Right ventricle myocardium superior (tissue), 1 donor: ENCODE measurements at regions of chr13 and their contacts with region 1.

Region 1: DNA sequence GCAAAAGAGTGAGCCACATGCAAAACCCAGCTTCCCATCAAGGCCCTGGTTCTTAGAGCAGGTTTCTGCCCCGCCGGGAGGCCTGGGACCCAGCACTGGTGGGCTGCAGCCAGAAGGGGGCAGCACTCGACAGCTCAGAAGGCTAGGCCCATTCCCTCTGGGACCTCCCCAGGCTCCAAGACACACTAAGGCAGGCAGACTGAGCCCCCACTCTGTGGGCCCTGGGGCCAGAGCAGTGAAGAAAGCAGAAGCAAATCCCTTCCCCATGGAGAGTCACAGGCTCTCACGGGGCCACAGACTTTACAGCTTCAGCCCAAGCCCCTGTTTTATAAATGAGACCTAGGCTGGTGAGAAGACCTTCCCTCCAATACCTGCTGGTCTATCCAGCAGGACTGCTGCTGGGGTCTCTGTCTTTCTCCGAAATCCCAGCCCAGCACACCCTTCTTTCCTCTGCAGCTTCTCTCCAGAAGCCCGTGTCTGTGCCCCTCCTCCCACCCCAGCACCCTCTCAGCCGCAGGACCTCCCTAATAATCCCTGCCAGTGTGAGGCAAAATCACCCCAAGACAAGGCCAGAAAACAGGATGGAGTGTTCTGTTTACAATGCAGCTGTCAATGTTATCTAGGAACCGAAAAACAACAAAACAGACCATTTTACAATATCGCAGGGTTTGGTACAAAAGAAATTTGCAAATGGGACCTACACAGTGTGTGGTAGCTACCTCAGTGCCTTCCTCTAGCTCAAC is 109.3 kb downstream of the ABCC4 start:
- DNase-seq: peak; percentile 86
- ATAC-seq: peak; percentile 91

Region 2: DNA sequence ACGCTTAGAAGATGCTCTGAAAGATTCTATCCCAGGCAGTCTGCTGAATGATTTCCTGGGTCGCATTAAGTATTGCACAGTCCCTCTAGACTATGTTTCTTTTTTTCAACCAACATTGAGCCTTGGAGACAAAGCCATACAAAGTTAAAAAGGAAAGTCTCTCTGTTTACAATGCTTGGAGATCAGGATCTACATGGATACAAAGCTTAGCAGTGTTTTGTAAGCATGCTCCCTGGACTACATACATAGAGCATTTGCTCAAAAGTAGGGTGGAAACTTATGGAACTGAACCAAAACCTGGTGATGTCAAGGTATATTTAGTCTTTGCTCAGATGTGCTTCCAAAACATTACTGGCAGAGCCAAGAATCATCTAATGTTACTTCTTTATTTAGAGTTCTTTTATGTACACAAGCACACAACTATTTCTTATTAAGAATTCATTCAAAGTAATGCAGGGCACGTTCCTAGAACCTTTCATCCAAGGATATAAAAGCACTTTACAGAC is 131.9 kb before region 1 on chr13:
- intact Hi-C with region 1: no loop called
- DNase-seq: no peak
- ATAC-seq: no peak

Region 3: GRCh38 chr13:95385808-95386207 is 193.8 kb after region 1 on chr13:
- intact Hi-C with region 1: loop called (anchors 2 kb)
- DNase-seq: no peak
- ATAC-seq: no peak

Region 4: DNA sequence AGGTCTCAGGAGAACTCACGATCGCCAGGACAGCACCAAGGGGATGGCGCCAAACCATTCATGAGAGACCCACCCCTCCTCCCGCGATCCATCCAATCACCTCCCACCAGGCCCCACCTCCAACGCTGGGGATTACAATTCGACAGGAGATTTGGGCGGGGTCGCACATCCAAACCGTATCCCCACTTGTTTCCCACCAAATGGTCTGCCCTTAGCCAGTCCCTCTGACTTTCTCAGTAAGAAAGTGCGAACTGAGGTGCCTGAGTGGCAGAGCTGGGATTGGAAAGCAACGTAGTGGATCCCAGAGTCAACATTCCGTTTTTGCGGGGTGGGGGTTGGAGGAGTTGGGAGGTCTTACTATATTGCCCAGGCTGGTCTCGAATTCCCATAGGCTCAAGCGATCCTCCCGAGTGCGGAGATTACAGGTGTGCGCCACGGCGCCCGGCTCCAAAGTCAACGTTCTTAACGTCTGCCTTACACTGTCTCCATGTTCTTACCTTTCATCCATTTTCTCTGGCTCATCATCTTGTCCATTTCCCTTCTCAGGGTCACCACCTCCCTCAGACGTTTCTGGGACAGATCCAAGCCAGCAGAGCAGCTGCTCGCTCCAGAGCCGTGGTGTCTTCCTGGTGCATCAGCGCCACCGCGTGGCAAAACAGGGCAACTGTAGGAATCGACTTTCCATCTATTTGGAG is 212.0 kb after region 1 on chr13:
- intact Hi-C with region 1: loop called (anchors 2 kb)
- DNase-seq: peak; percentile 89
- ATAC-seq: peak; percentile 97

Region 5: DNA sequence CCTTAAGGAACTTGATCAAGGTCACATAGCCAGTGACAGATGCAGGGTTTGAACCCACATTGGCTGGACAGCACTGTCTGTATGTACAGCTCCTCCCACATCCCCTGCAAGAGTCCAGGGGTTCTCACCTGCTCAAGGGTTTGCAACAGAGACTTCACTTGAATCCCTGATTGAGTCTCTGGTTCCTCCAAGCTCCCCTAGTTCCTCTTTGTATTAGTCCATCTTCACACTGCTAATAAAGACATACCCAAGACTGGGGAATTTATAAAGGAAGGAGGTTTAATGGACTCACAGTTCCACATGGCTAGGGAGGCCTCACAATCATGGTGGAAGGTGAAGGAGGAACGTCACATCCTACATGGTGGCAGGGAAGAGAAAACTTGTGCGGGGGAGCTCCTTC is 287.7 kb after region 1 on chr13:
- intact Hi-C with region 1: loop called (anchors 10 kb)
- DNase-seq: no peak
- ATAC-seq: no peak